T-cell (primary cell): ENCODE measurements at regions of chrX and their contacts with region 1.

Region 1: DNA sequence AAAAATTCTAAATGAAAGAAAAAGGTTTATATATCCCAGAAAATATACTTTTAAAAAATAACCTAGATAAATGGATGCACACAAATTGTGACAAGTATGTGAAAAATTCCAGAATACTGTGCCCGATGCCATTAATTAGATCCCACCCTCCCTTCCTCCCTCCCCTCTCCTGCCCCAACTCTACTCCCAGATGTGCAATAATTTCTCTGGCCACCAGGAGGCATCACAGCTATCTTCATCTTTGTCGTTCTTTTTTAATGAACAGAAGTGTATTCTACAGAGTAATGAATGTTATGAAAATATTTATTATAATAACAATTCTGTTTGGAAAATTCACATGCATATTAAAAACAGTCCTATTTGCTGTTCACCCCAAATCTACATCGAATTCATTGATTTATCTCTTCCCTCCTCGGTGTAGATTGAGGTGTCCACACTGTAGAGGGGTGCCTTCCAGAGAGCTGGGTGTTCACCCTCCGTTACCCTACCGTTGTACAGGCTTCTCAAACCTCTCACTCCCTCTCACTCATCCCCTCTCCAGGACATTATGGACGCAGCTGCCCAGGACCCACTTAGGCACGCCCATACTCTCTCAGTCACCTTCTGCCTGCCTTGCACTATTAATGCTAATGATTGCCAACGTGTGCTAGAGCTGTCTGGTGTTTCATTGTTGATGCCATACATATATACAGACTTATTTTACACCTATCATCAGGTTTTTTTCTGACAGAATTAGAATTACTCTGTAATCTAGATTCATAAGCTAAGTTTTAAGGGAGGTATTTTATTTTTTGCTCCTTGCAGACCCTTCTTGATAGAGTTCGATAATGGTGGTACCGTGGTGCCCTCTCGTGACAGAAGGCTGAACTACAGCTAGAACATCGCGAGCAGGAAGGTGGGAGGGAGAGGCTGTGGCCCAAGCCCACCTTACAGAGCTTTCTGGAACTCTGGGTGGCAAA is 14.1 kb downstream of the RAB40AL start:
- DNase-seq: peak in 33 of 35 experiments; percentile 4 to 69 (median 36)
- ATAC-seq: peak; percentile 61 to 79 (median 73)
- H3K4me3 ChIP-seq: peak overlapping the region; percentile 32 to 37
- H3K4me3 Mint-ChIP-seq: peak overlapping the region; percentile 49 to 75 (median 69)
- H3K27ac ChIP-seq: no peak overlapping the region
- H3K27ac Mint-ChIP-seq: no peak overlapping the region
- H3K4me1 ChIP-seq: peaks cover 0 to 2% of the 10 kb centered on the region in 2 experiments
- H3K4me1 Mint-ChIP-seq: peaks cover 6 to 7% (median 6%) of the 10 kb centered on the region in 3 donors
- H3K27me3 ChIP-seq: no peaks in the 10 kb centered on the region
- H3K27me3 Mint-ChIP-seq: peaks cover 3 to 7% of the 10 kb centered on the region in 2 donors

Region 2: DNA sequence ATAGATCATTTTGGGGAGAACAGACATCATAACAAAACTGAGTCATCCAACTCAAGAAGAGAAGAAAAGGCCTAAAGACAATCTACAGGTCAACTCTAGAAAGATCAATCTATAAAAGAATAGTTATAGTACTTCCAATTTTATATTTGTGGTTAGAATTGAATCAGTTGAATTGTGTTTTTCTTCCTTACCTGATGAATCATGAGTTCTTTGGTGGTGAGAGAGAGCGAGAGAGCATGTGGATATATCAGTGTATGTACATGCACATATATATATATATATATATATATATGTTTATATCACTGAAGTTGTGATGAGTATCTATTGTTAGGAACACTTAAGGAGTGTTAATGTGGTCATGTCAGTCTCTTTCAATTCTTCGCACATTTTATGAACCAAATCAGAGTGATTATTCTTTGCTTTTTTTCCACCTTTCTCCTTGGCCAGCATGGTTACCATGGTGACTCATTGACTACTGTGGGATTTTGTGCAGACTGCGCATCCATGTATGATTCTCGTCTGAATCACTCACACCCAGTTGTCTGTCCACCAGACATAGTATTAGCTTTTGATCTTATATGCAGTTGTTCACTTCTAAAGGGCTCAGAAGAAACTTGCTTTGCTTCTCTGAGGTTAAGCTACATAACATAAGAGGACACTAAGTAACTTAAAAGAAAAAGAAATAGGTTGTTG is 104.5 kb before region 1 on chrX:
- CTCF ChIA-PET with region 1: no interaction called
- POLR2A ChIA-PET with region 1: no interaction called
- DNase-seq: no peak
- ATAC-seq: no peak
- H3K4me3 ChIP-seq: no peak overlapping the region
- H3K4me3 Mint-ChIP-seq: no peak overlapping the region
- H3K27ac ChIP-seq: no peak overlapping the region
- H3K27ac Mint-ChIP-seq: no peak overlapping the region
- H3K4me1 ChIP-seq: no peaks in the 10 kb centered on the region
- H3K4me1 Mint-ChIP-seq: no peaks in the 10 kb centered on the region
- H3K27me3 ChIP-seq: no peaks in the 10 kb centered on the region
- H3K27me3 Mint-ChIP-seq: no peaks in the 10 kb centered on the region

Region 3: GRCh38 chrX:102934624-102935023 is 16.6 kb before region 1 on chrX:
- CTCF ChIA-PET with region 1: interaction called, 5 to 11 read pairs
- POLR2A ChIA-PET with region 1: no interaction called
- DNase-seq: peak in 15 of 35 experiments; percentile 0 to 43 (median 10)
- ATAC-seq: no peak
- H3K4me3 ChIP-seq: no peak overlapping the region
- H3K4me3 Mint-ChIP-seq: no peak overlapping the region
- H3K27ac ChIP-seq: no peak overlapping the region
- H3K27ac Mint-ChIP-seq: no peak overlapping the region
- H3K4me1 ChIP-seq: no peaks in the 10 kb centered on the region
- H3K4me1 Mint-ChIP-seq: no peaks in the 10 kb centered on the region
- H3K27me3 ChIP-seq: no peaks in the 10 kb centered on the region
- H3K27me3 Mint-ChIP-seq: peaks cover 0 to 10% of the 10 kb centered on the region in 2 donors

Region 4: GRCh38 chrX:103120748-103121147 is 169.6 kb after region 1 on chrX:
- CTCF ChIA-PET with region 1: no interaction called
- POLR2A ChIA-PET with region 1: no interaction called
- DNase-seq: no peak
- ATAC-seq: no peak
- H3K4me3 ChIP-seq: no peak overlapping the region
- H3K4me3 Mint-ChIP-seq: no peak overlapping the region
- H3K27ac ChIP-seq: no peak overlapping the region
- H3K27ac Mint-ChIP-seq: no peak overlapping the region
- H3K4me1 ChIP-seq: no peaks in the 10 kb centered on the region
- H3K4me1 Mint-ChIP-seq: no peaks in the 10 kb centered on the region
- H3K27me3 ChIP-seq: no peaks in the 10 kb centered on the region
- H3K27me3 Mint-ChIP-seq: peaks cover 0 to 12% of the 10 kb centered on the region in 2 donors

Region 5: DNA sequence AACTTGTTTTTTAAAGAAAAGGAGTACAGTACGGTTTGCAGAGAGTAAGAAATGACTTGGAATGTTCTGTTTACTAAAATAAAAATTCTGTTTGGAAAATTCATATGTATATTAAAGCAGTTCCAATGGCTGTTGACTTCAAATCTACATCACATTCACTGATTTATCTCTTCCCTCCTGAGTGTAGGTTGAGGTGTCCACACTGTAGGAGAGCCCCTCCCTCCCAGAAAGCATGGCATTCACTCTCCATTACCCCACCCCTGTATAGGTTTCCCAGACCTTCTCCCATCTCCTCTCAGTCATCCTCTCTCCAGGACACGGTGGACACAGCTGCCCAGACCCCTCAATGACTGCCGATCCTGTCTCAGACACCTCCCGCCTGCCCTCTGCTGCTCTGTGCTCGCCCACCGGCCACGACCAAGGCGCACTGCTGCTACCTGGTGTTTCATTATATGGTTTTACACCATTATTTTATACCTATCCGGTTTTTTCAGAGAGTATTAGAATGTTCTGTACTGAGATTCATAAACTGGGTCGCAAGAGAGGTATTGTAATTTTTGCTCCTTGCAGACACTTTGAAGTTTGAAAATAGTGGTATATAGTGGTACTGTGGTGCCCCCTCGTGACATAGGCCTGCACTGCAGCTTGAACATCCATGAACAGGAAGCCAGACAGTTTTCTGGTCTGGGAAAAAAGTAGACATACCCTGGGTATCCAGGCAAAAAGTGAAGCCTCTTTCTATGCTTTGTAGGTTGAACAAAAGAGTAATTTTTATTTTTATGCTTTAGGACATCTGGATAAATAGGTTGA is 225.0 kb after region 1 on chrX:
- CTCF ChIA-PET with region 1: interaction called, 9 to 11 read pairs
- POLR2A ChIA-PET with region 1: no interaction called
- DNase-seq: peak in 33 of 35 experiments; percentile 13 to 66 (median 42)
- ATAC-seq: peak; percentile 57 to 66 (median 64)
- H3K4me3 ChIP-seq: no peak overlapping the region
- H3K4me3 Mint-ChIP-seq: peak overlapping the region in 1 of 3 donors; percentile 14
- H3K27ac ChIP-seq: no peak overlapping the region
- H3K27ac Mint-ChIP-seq: no peak overlapping the region
- H3K4me1 ChIP-seq: peaks cover 0 to 2% of the 10 kb centered on the region in 2 experiments
- H3K4me1 Mint-ChIP-seq: peaks cover 0 to 4% (median 4%) of the 10 kb centered on the region in 3 donors
- H3K27me3 ChIP-seq: peaks cover 2 to 3% of the 10 kb centered on the region in 2 experiments
- H3K27me3 Mint-ChIP-seq: peaks cover 8 to 14% of the 10 kb centered on the region in 2 donors